Sigmoid colon (tissue), 7 donors: ENCODE measurements at regions of chr11 and their contacts with region 1.

Region 1: GRCh38 chr11:95296621-95297025 is 65.6 kb upstream of the SESN3 start:
- DNase-seq: no peak
- H3K4me3 ChIP-seq: no peak overlapping the region
- H3K27ac ChIP-seq: peak overlapping the region in 3 of 4 donors; percentile 24 to 65 (median 52)
- H3K4me1 ChIP-seq: peaks cover 0 to 32% (median 31%) of the 10 kb centered on the region in 4 donors
- H3K27me3 ChIP-seq: no peaks in the 10 kb centered on the region
- CTCF ChIP-seq: no peak
- EP300 ChIP-seq: no peak
- POLR2A ChIP-seq: no peak

Region 2: DNA sequence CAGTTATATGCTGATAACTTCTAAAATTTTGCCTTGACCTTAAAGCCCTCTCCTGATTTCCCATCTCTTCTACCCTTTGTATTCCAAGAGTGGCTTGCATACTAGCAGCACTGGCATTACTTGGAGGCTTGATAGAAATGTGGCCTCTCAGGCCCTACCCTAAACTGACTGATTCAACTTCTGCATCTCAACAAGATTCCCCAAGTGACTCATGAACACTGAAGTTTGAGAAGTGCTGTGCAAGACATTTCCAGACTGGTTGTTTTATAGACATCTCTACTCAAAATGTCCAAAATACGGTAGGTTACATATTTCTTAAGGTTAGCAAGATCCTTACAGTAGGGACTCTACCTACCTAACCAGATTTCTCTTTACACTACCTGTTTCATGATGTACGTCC is 114.2 kb before region 1 on chr11:
- intact Hi-C with region 1: no loop called
- DNase-seq: no peak
- H3K4me3 ChIP-seq: no peak overlapping the region
- H3K27ac ChIP-seq: no peak overlapping the region
- H3K4me1 ChIP-seq: no peaks in the 10 kb centered on the region
- H3K27me3 ChIP-seq: no peaks in the 10 kb centered on the region
- CTCF ChIP-seq: no peak
- EP300 ChIP-seq: no peak
- POLR2A ChIP-seq: no peak

Region 3: GRCh38 chr11:95337175-95337957 is 40.7 kb after region 1 on chr11:
- intact Hi-C with region 1: loop called (anchors 5 kb)
- DNase-seq: peak; percentile 79
- H3K4me3 ChIP-seq: peak overlapping the region in 2 of 4 donors; percentile 9 to 18
- H3K27ac ChIP-seq: peak overlapping the region; percentile 74 to 87 (median 84)
- H3K4me1 ChIP-seq: peaks cover 0 to 48% (median 38%) of the 10 kb centered on the region in 4 donors
- H3K27me3 ChIP-seq: no peaks in the 10 kb centered on the region
- CTCF ChIP-seq: no peak
- EP300 ChIP-seq: no peak
- POLR2A ChIP-seq: no peak

Region 4: DNA sequence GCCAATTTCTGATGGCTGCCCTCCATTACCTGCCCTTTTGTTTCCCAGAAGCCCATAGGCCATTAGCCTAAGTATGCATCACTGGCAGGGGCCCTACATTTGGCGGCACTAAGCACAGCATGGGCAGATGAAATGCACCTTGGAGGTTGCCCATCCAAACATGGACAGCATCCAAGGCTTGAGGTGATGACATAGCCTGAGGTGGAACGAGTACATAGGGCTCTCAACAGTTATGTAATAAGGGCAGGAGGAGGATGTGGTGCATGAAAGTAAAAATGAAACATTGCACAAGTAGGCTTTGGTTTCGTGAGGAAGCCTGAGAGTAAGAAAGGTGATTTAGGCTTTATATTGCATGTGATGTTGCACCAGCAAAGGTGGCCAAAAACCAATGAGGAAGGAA is 344.9 kb after region 1 on chr11:
- intact Hi-C with region 1: loop called (anchors 10 kb)
- DNase-seq: no peak
- H3K4me3 ChIP-seq: no peak overlapping the region
- H3K27ac ChIP-seq: peak overlapping the region in 1 of 4 donors; percentile 60
- H3K4me1 ChIP-seq: peaks cover 0 to 2% (median 0%) of the 10 kb centered on the region in 4 donors
- H3K27me3 ChIP-seq: no peaks in the 10 kb centered on the region
- CTCF ChIP-seq: no peak
- EP300 ChIP-seq: no peak
- POLR2A ChIP-seq: no peak

Region 5: DNA sequence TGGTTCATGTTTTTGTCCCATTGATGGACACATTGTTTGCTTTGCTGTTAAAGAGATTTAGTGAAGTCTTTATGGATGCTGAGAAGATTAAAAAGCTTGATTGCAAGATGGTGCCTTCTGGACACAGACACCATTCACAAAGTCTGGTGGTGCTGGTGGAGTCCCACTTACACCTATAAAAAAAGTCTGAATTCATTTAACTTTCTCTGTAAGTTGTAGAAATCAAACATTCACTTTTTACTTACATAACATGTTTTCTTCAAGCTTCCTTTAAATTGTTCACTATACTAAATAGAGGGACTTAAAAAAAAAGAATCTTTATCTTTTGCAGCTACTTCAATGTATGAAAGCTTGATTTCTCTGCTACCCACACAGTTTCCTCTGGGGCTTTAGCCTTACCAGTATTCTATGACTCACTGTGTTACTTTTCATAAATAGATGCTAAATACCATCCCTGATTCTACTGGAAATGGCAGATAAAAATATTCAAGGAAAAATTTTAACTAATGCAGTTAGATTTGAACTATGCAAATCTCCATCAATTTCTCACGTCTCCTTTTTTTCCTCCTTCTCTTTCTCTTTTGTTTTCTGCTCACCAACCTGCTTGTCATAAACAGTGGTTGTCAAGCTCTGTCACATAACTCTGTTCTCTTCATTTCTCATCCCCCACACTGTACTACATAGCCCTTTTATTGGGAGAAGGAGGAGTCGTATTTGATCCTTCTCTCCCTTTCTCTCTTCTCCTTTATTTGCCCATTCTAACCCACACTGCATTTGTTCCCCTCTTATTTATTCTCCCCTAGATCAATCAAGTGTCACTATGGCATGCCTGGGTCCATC is 403.2 kb after region 1 on chr11:
- intact Hi-C with region 1: loop called (anchors 5 kb)
- DNase-seq: no peak
- H3K4me3 ChIP-seq: no peak overlapping the region
- H3K27ac ChIP-seq: no peak overlapping the region
- H3K4me1 ChIP-seq: peaks cover 0 to 31% (median 29%) of the 10 kb centered on the region in 4 donors
- H3K27me3 ChIP-seq: no peaks in the 10 kb centered on the region
- CTCF ChIP-seq: no peak
- EP300 ChIP-seq: no peak
- POLR2A ChIP-seq: no peak